Colonic mucosa (tissue), 4 donors: ENCODE measurements at regions of chr1 and their contacts with region 1.

Region 1: GRCh38 chr1:26169669-26170471 is at the start of gene ZNF593:
- DNase-seq: peak; percentile 92
- H3K4me3 ChIP-seq: peak within 1 kb of the TSS; percentile 92
- H3K27ac ChIP-seq: peak within 1 kb of the TSS; percentile 48
- H3K4me1 ChIP-seq: peaks cover 6% of the 10 kb centered on the region
- H3K27me3 ChIP-seq: no peaks in the 10 kb centered on the region
- CTCF ChIP-seq: peak; percentile 88
- total RNA-seq, gene ZNF593: 22.0 to 47.7 TPM

Region 2: DNA sequence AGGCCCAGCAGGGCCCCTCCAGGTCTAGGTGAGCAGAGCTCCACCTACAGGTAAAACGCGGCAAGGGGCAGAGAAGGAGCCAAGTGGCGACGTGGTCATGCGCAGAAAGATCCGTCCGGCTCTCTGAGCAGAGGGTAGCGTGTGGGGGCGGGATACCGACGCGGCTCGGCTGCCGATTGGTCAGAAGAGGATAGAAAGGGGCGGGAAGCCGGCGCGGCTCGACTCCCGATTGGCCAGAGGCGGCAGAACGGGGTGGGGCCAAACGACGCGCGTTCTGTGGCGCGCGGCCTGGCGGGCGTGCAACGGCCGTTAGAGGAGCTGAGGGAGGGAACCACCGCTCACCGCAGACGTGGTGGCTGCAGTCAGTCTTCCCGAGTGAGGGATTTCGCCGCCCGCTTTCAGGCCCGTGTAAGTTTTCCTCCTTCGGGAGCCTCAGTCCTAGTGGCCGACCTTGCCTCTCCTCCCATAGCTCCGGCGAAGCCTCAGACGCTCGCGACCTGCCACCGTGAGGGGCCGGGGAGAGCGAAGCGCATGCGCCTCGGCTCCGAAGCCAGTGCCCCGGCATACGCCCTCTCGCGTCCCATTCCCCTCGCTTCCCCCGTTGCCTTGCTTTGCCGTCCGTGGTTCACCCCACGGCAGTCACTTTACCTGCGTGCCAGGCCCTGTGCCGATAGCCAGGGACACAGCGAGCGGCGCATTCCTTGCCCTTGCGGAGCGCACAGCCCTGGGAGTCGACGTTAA is 64.2 kb after region 1 on chr1 and contains the start of gene CEP85:
- intact Hi-C with region 1: loop called (anchors 5 kb)
- DNase-seq: peak; percentile 99
- H3K4me3 ChIP-seq: peak within 1 kb of the TSS; percentile 60
- H3K27ac ChIP-seq: peak within 1 kb of the TSS; percentile 84
- H3K4me1 ChIP-seq: peaks cover 15% of the 10 kb centered on the region
- H3K27me3 ChIP-seq: no peaks in the 10 kb centered on the region
- CTCF ChIP-seq: peak; percentile 90
- total RNA-seq, gene CEP85: 10.7 to 18.8 TPM